K562 (cell line): ENCODE measurements at regions of chr5 and their contacts with region 1.

Region 1: DNA sequence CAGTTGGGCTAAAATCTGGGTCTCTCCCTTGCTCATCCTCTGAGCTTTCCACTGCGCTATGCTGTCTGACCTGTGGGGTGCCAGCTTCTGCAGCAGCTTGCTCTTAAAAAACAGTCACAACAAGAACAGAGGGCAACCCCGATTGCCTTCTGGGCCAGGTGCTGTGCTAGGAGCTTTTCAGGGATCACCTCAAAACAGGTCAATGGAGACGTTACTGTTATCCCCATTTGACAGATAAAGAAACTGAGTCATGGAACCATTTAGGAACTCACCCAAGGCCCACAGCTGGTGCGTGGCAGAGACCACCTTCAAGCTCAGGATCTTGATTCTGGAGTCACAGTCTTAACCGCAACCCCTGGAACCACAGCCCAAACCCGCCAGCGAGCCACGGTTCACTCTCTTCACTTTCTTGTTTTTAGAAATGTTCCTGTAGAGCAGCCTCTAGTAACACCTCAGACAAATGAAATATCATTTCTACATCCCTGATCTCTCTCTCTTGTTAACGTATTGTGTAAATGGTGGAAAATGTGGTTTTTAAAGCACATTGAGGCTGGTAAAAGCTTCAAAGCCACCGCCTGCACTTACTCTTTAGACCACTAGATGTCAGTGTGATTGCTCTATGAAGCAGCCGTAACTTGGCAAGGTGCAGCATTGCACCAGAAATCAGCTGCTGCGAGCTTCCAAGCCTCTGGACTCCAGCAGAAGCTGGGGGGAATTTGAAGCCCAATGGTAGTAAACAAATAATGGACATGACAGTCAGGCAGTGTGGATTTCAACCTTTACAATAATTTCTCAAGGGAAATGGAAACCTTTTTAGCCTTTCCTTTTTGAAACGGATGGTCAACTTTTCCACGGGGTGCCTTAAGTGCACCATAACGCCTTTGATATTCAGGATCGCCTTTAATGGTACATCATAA is 1.7 kb downstream of the FYB1 start:
- DNase-seq: peak; percentile 78 to 87 (median 80)
- ATAC-seq: peak; percentile 88
- H3K4me3 ChIP-seq: no peak overlapping the region
- H3K27ac ChIP-seq: no peak overlapping the region
- H3K4me1 ChIP-seq: peaks cover 0 to 17% of the 10 kb centered on the region in 2 experiments; a peak in 4 of 5 replicates
- H3K27me3 ChIP-seq: no peaks in the 10 kb centered on the region
- CTCF ChIP-seq: peak; percentile 91 to 98 (median 97)
- EP300 ChIP-seq: no peak
- POLR2A ChIP-seq: no peak
- RAD21 ChIP-seq: peak; percentile 96 to 97

Region 2: GRCh38 chr5:37565067-37565670 is 1652.5 kb before region 1 on chr5:
- CTCF ChIA-PET with region 1: no interaction called
- POLR2A ChIA-PET with region 1: no interaction called
- in situ Hi-C with region 1: no loop called
- intact Hi-C with region 1: no loop called
- DNase-seq: no peak
- ATAC-seq: no peak
- H3K4me3 ChIP-seq: no peak overlapping the region
- H3K27ac ChIP-seq: no peak overlapping the region
- H3K4me1 ChIP-seq: peaks cover 0 to 4% of the 10 kb centered on the region in 2 experiments; a peak in 1 of 5 replicates
- H3K27me3 ChIP-seq: no peaks in the 10 kb centered on the region
- CTCF ChIP-seq: no peak
- EP300 ChIP-seq: no peak
- POLR2A ChIP-seq: no peak
- RAD21 ChIP-seq: no peak

Region 3: DNA sequence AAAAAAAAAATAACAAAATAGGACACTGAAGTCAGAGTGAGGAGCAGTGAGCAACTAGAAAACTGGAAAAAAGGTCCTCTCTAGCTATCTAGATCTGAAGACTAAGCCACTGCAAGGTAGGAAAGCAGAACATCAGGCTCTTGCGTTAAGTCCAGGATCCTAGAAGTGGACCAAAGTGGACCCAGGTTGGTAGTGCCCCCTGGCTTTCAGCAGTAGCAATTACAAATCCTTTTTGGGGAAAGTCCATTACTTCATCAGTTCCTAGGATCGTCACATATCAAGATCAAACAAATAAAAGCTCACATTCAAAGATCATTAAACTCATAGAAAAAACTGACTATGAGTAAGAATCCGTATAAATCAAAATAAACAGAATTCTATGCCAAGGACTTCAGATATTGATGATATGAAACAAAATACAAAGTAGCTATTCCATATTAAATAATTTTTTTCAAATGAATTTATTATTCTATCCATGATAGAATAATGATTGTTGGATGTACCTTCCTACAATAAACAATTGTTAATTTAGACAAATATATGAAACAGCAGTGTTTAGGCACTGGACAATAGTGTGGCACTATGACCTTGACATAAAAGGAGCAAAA is 136.9 kb before region 1 on chr5:
- CTCF ChIA-PET with region 1: no interaction called
- POLR2A ChIA-PET with region 1: no interaction called
- in situ Hi-C with region 1: no loop called
- intact Hi-C with region 1: loop called (anchors 5 kb)
- DNase-seq: peak; percentile 63 to 85 (median 74)
- ATAC-seq: peak; percentile 80
- H3K4me3 ChIP-seq: no peak overlapping the region
- H3K27ac ChIP-seq: no peak overlapping the region
- H3K4me1 ChIP-seq: peaks cover 0 to 4% of the 10 kb centered on the region in 2 experiments; a peak in 2 of 5 replicates
- H3K27me3 ChIP-seq: no peaks in the 10 kb centered on the region
- CTCF ChIP-seq: peak; percentile 82 to 94 (median 93)
- EP300 ChIP-seq: no peak; the same call in 1 of the 2 replicates
- POLR2A ChIP-seq: no peak
- RAD21 ChIP-seq: peak; percentile 80 to 91

Region 4: GRCh38 chr5:39274398-39275085 is 56.9 kb after region 1 on chr5:
- CTCF ChIA-PET with region 1: no interaction called
- POLR2A ChIA-PET with region 1: no interaction called
- in situ Hi-C with region 1: loop called (anchors 5 kb)
- intact Hi-C with region 1: no loop called
- DNase-seq: no peak
- ATAC-seq: no peak; the same call in 2 of the 3 replicates
- H3K4me3 ChIP-seq: no peak overlapping the region
- H3K27ac ChIP-seq: peak overlapping the region; percentile 38; the same call in 1 of the 3 replicates
- H3K4me1 ChIP-seq: peaks cover 3 to 9% of the 10 kb centered on the region in 2 experiments; a peak in 4 of 5 replicates
- H3K27me3 ChIP-seq: no peaks in the 10 kb centered on the region
- CTCF ChIP-seq: no peak
- EP300 ChIP-seq: no peak
- POLR2A ChIP-seq: no peak
- RAD21 ChIP-seq: no peak

Region 5: GRCh38 chr5:39370555-39371366 is 153.1 kb after region 1 on chr5:
- CTCF ChIA-PET with region 1: no interaction called
- POLR2A ChIA-PET with region 1: no interaction called
- in situ Hi-C with region 1: no loop called
- intact Hi-C with region 1: loop called (anchors 5 kb)
- DNase-seq: no peak
- ATAC-seq: no peak
- H3K4me3 ChIP-seq: no peak overlapping the region
- H3K27ac ChIP-seq: no peak overlapping the region
- H3K4me1 ChIP-seq: 0 out of 5 replicates have a peak, but pooled peaks cover 0 to 3% of the 10 kb centered on the region in 2 experiments
- H3K27me3 ChIP-seq: no peaks in the 10 kb centered on the region
- CTCF ChIP-seq: no peak
- EP300 ChIP-seq: no peak
- POLR2A ChIP-seq: no peak
- RAD21 ChIP-seq: no peak

Region 6: DNA sequence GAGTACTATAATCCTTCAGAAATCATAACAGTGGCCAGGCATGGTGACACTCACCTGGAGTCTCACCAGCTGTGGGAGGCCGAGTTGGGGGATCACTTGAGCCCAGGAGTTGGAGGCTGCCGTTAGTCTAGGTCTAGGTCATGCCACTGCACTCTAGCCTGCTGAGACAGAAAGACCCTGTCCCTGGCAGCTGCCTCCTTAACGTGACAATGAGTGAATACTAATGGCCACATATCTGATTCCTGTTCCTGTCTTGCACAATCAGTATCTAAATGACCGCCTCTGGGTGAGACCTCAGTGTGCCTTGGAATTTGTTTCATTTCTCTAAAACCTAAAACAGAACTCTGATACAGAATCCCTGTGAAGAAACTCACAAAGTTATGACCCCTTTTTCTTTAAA is 338.2 kb after region 1 on chr5:
- CTCF ChIA-PET with region 1: no interaction called
- POLR2A ChIA-PET with region 1: no interaction called
- in situ Hi-C with region 1: loop called (anchors 10 kb)
- intact Hi-C with region 1: no loop called
- DNase-seq: no peak
- ATAC-seq: no peak
- H3K4me3 ChIP-seq: no peak overlapping the region
- H3K27ac ChIP-seq: no peak overlapping the region
- H3K4me1 ChIP-seq: no peaks in the 10 kb centered on the region
- H3K27me3 ChIP-seq: peaks cover 10 to 11% of the 10 kb centered on the region in 2 experiments; a peak in 4 of 5 replicates
- CTCF ChIP-seq: no peak
- EP300 ChIP-seq: no peak
- POLR2A ChIP-seq: no peak
- RAD21 ChIP-seq: no peak